Activated T-helper 1 cell treated with anti-CD3 and anti-CD28 coated beads, Interleukin-12 subunit alpha, Interleukin-12 subunit beta, Interleukin-2, Interleukin-4 antibody, amounts not matched to agents 30 ng/mL and 10 ng/mL and 1 ng/mL, durations not matched to agents 14 hours and 24 hours and 36 hours (primary cell): ENCODE measurements at regions of chr5 and their contacts with region 1.

Region 1: GRCh38 chr5:150458819-150459557 is 9.4 kb upstream of the RPS14 start:
- DNase-seq: peak; percentile 75
- H3K4me3 Mint-ChIP-seq: no peak overlapping the region
- H3K27ac Mint-ChIP-seq: no peak overlapping the region
- H3K4me1 Mint-ChIP-seq: peaks cover 19% of the 10 kb centered on the region
- H3K27me3 Mint-ChIP-seq: peaks cover 1% of the 10 kb centered on the region

Region 2: DNA sequence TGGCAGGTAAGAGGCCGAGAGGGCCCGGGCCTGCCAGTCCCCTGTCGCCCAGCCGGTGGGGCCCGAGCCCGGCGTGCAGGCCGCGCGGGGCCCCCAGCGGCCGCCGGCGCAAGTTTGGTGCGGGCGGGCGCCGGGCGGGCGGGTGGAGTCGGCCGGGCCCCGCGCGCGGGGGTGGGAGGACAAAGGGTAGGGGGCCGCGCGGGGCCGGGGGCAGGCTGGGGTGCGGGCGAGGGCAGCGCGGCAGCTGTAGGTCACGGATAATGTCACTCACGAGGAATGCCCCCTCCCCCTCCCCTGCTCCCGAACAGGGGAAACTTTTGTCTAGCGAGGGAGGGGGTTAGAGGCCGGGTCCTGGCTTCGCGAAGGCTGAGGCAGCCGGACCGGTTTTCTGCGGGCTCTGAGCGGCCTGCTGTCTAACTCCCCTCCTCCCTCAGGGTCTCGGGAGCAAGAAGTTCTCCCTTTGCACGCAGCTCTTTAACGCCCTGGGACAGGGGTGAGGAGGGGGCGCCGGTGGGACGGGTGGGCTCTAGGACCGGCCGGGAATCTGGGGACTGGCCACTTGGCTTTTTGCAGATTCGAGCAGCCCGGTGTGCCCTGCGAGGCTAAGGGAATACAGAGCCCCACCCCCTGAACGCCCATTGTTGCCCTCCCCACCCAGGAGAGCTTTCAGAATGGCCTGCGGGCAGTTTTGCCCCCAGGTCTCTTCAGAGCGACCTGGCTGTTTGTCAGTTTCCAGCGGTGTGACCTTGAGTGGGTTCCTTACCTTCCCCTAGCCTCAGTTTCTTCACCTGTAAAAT is 27.6 kb after region 1 on chr5:
- intact Hi-C with region 1: loop called (anchors 2 kb)
- DNase-seq: peak; percentile 11
- H3K4me3 Mint-ChIP-seq: peak overlapping the region; percentile 68
- H3K27ac Mint-ChIP-seq: no peak overlapping the region
- H3K4me1 Mint-ChIP-seq: no peaks in the 10 kb centered on the region
- H3K27me3 Mint-ChIP-seq: peaks cover 11% of the 10 kb centered on the region

Region 3: DNA sequence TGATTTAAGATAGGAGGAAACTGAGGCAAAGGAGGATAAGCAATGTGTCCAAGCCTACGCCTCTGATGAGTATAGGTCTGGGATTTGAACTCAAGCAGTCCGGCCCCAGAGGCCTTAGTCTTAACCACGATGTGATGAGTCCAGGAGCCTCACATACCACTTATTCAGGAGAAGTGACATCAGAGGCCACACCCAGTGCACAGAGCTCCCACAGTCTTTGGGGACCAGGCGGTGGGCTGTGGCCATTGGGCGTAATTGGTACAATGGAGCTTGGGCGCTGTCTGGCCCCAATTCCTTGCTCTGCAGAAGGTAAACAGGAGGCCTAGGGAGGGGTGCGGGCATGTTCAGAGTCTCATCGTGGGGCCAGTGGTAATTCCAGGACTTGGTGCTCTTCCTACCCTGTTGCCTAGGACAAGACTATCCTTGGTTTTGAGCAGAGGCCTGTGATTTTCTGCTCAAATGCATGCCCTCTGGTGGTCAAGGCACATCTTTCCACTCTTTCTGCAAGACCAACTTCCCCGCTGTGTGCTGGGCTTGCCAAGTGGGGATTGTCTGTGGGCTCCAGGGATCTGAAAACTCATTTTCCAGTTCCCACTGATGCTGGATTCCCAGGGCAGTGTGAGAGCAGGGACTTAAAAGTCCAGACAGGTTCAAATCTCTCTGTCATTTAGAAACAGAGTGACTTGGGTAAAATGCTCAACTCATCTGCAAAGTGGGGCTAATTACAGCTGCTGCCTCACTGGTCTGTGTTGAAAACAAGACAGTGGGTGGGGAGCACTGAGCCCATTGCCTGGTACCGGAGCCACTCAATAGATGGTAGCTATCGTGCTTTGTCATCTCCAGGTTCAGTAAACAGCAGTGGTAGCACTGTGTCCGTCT is 64.7 kb after region 1 on chr5:
- intact Hi-C with region 1: loop called (anchors 1 kb)
- DNase-seq: no peak
- H3K4me3 Mint-ChIP-seq: no peak overlapping the region
- H3K27ac Mint-ChIP-seq: no peak overlapping the region
- H3K4me1 Mint-ChIP-seq: no peaks in the 10 kb centered on the region
- H3K27me3 Mint-ChIP-seq: no peaks in the 10 kb centered on the region

Region 4: DNA sequence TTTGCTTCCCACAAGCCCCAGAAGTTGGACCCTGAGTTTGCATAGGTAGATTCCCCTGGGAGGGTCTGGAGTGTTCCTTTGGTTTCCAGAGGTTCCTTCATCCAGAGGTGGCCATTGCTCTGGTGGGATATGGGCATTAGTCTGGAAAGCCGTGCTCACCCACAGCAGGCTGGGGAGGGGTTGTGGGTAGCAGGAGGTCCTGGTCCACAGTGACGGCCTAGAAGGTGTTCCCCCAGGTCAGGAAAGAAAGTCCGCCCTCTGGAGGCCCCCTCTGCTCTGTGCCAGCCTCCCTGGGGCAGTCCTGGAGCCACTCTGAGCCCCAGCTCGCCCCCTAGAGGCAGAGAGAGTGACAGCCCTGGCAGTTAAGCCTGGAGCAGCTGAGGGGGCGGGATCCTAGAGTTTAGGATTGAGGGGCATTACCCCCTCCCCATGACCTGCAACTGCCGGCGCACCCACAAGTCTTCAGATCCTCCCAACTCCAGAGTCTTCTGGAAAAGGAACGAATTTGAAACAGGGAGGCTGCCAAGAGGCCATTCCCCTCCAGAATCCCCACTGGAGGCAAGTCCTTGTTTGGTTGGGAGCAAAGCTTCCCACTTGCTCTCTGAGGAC is 85.7 kb after region 1 on chr5:
- intact Hi-C with region 1: loop called (anchors 1 kb)
- DNase-seq: peak; percentile 35
- H3K4me3 Mint-ChIP-seq: no peak overlapping the region
- H3K27ac Mint-ChIP-seq: no peak overlapping the region
- H3K4me1 Mint-ChIP-seq: no peaks in the 10 kb centered on the region
- H3K27me3 Mint-ChIP-seq: no peaks in the 10 kb centered on the region

Region 5: DNA sequence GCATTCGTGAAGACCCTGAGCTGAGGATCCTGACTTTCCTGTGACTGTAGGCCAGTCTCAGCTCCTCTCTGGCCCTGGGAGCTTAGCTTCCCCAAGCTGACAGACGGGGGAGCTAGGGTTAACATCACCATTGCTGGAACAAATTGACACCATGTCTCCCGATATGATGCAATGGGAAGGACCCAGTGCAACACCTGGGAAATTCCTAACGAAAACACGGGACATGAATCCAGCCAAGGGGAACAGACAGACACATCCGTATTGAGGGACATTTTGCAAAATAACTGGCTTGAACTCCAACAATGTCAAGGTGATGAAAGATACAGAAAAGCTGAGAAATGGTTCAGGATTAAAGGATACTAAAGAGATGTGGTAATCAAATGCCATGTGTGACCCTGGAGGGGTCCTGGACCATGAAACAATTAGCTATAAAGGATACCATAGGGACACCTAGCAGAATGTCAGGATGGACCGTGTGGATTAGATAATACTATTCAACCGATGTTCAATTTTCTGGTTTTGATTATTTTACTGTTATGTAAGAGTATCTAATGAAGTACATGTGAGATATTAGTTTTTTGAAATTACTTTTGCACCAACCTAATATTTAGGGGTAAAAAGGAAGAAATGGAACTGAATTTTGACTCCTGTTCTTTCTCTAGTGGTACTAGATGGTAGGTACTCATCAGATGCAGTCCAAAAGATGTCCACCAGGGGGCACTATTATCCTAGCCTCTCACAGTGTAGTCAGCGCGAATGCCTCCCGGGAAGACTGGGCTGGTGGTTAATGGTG is 101.6 kb after region 1 on chr5:
- intact Hi-C with region 1: loop called (anchors 1 kb)
- DNase-seq: peak; percentile 71
- H3K4me3 Mint-ChIP-seq: no peak overlapping the region
- H3K27ac Mint-ChIP-seq: no peak overlapping the region
- H3K4me1 Mint-ChIP-seq: no peaks in the 10 kb centered on the region
- H3K27me3 Mint-ChIP-seq: peaks cover 7% of the 10 kb centered on the region

Region 6: GRCh38 chr5:150656191-150657132 is 197.5 kb after region 1 on chr5:
- intact Hi-C with region 1: loop called (anchors 2 kb)
- DNase-seq: peak; percentile 74
- H3K4me3 Mint-ChIP-seq: peak overlapping the region; percentile 64
- H3K27ac Mint-ChIP-seq: no peak overlapping the region
- H3K4me1 Mint-ChIP-seq: peaks cover 7% of the 10 kb centered on the region
- H3K27me3 Mint-ChIP-seq: peaks cover 21% of the 10 kb centered on the region